ENCODE measurements at regions of chrX and their contacts with region 1.

Region 1: DNA sequence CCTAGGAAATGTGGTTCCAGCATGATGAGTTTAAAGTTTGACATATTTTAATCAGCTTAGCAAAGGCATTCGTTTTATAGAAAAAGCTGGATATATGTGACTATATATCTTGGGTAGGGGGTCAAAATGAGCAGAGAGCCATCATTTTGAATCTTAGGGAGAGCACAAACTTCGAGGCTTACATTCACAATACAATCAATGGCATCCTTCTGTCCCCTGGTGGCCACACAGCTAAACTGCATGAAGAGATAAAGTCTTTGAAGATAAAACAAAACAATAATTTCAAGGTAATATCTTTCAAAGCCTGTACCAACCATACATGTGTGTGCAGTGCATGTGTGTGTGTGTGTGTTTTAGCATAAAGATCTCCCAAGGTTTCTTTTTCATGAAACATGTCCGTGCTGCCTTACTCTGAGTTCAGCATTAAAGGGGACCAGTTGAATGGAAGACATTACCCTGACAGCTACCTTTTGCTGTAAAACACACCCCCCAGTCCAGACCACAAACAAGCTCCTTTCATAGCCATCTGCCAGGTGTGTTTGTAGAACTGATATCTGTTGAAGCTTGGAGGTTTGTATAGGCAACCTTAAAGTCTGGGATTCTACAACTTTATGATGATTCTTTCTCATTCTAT is 22.0 kb downstream of the DYNLT3 start:
- DNase-seq: peak; percentile 68
- ATAC-seq: peak; percentile 87
- H3K4me3 ChIP-seq: peak overlapping the region in 1 of 5 experiments; percentile 24
- H3K4me3 Mint-ChIP-seq: peak overlapping the region; percentile 21
- H3K27ac ChIP-seq: no peak overlapping the region
- H3K27ac Mint-ChIP-seq: peak overlapping the region; percentile 85
- H3K4me1 ChIP-seq: peaks cover 23 to 26% of the 10 kb centered on the region in 2 donors
- H3K4me1 Mint-ChIP-seq: peaks cover 49% of the 10 kb centered on the region
- H3K27me3 ChIP-seq: no peaks in the 10 kb centered on the region
- H3K27me3 Mint-ChIP-seq: no peaks in the 10 kb centered on the region
- CTCF ChIP-seq: peak; percentile 78

Region 2: GRCh38 chrX:37685452-37686353 is 139.6 kb before region 1 on chrX and contains the start of gene XK:
- CTCF ChIA-PET with region 1: no interaction called
- POLR2A ChIA-PET with region 1: no interaction called
- intact Hi-C with region 1: loop called (anchors 5 kb)
- DNase-seq: peak; percentile 56
- ATAC-seq: peak; percentile 75
- H3K4me3 ChIP-seq: peak within 1 kb of the TSS in 4 of 5 experiments; percentile 36 to 55 (median 46)
- H3K4me3 Mint-ChIP-seq: peak within 1 kb of the TSS; percentile 87
- H3K27ac ChIP-seq: no peak within 1 kb of the TSS
- H3K27ac Mint-ChIP-seq: peak within 1 kb of the TSS; percentile 15
- H3K4me1 ChIP-seq: peaks cover 0 to 3% of the 10 kb centered on the region in 2 donors
- H3K4me1 Mint-ChIP-seq: no peaks in the 10 kb centered on the region
- H3K27me3 ChIP-seq: peaks cover 0 to 7% (median 0%) of the 10 kb centered on the region in 4 experiments
- H3K27me3 Mint-ChIP-seq: no peaks in the 10 kb centered on the region
- CTCF ChIP-seq: no peak
- total RNA-seq, gene XK: 0.30 and 0.34 TPM in 2 replicates

Region 3: GRCh38 chrX:37787423-37787869 is 37.9 kb before region 1 on chrX:
- CTCF ChIA-PET with region 1: interaction called, 22 read pairs
- POLR2A ChIA-PET with region 1: interaction called, 7 read pairs
- intact Hi-C with region 1: no loop called
- DNase-seq: peak; percentile 73
- ATAC-seq: peak; percentile 63
- H3K4me3 ChIP-seq: peak overlapping the region; percentile 15 to 50 (median 30)
- H3K4me3 Mint-ChIP-seq: peak overlapping the region; percentile 75
- H3K27ac ChIP-seq: peak overlapping the region; percentile 84 to 87
- H3K27ac Mint-ChIP-seq: peak overlapping the region; percentile 94
- H3K4me1 ChIP-seq: peaks cover 71 to 82% of the 10 kb centered on the region in 2 donors
- H3K4me1 Mint-ChIP-seq: peaks cover 71% of the 10 kb centered on the region
- H3K27me3 ChIP-seq: peaks cover 0 to 3% (median 0%) of the 10 kb centered on the region in 4 experiments
- H3K27me3 Mint-ChIP-seq: no peaks in the 10 kb centered on the region
- CTCF ChIP-seq: no peak

Region 4: DNA sequence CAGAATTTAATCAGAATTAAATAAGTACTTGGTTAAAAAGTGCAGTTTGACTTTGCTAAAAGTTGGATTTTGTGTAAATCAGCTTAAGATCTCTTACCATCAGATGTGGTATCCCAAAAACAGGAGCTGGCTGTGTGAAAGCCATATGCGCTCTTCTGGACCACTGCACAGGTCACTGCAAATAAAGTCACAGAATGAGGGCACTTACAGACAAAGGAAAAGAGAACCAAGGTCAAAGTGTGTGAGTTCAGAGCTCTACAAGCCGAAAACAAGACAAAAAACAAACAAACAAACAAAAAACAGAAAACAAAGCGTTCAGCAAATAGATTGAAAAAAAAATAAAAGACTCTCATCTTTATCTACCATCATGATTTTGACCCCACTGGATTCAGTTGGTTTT is 15.6 kb after region 1 on chrX:
- CTCF ChIA-PET with region 1: interaction called, 12 read pairs
- POLR2A ChIA-PET with region 1: no interaction called
- intact Hi-C with region 1: no loop called
- DNase-seq: no peak
- ATAC-seq: no peak
- H3K4me3 ChIP-seq: no peak overlapping the region
- H3K4me3 Mint-ChIP-seq: no peak overlapping the region
- H3K27ac ChIP-seq: no peak overlapping the region
- H3K27ac Mint-ChIP-seq: no peak overlapping the region
- H3K4me1 ChIP-seq: no peaks in the 10 kb centered on the region
- H3K4me1 Mint-ChIP-seq: peaks cover 5% of the 10 kb centered on the region
- H3K27me3 ChIP-seq: no peaks in the 10 kb centered on the region
- H3K27me3 Mint-ChIP-seq: no peaks in the 10 kb centered on the region
- CTCF ChIP-seq: no peak

Region 5: DNA sequence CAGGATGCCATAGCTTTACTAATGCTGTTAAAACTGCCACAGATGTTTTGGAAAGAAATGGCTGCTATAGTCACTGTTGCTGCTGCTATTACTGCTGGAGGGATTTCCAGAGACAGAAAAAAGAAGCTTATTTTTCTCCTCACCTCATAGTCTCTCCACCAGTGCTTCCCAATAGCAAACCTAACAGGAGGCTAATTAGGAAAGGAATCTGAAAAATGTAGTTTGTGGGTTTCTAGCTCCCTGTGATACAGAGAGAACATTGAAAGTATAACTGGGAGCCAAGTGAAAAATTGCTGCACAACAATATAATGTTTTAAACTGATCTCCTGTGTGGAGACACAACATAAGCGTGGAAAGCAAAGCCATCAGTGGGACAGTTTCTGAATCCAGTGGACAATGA is 727.4 kb after region 1 on chrX:
- CTCF ChIA-PET with region 1: no interaction called
- POLR2A ChIA-PET with region 1: no interaction called
- intact Hi-C with region 1: no loop called
- DNase-seq: no peak
- ATAC-seq: no peak
- H3K4me3 ChIP-seq: no peak overlapping the region
- H3K4me3 Mint-ChIP-seq: no peak overlapping the region
- H3K27ac ChIP-seq: no peak overlapping the region
- H3K27ac Mint-ChIP-seq: no peak overlapping the region
- H3K4me1 ChIP-seq: no peaks in the 10 kb centered on the region
- H3K4me1 Mint-ChIP-seq: no peaks in the 10 kb centered on the region
- H3K27me3 ChIP-seq: no peaks in the 10 kb centered on the region
- H3K27me3 Mint-ChIP-seq: no peaks in the 10 kb centered on the region
- CTCF ChIP-seq: no peak

Measured in B cell (primary cell).